Endothelial cell of umbilical vein (primary cell): ENCODE measurements at regions of chr4 and their contacts with region 1.

Region 1: GRCh38 chr4:90293320-90293719 is 166.1 kb downstream of the CCSER1 start:
- DNase-seq: peak; percentile 23
- H3K4me3 ChIP-seq: no peak overlapping the region
- H3K27ac ChIP-seq: no peak overlapping the region
- H3K4me1 ChIP-seq: no peaks in the 10 kb centered on the region
- H3K27me3 ChIP-seq: no peaks in the 10 kb centered on the region
- CTCF ChIP-seq: peak; percentile 11 to 13
- POLR2A ChIP-seq: no peak

Region 2: GRCh38 chr4:89226665-89227574 is 1066.4 kb before region 1 on chr4:
- CTCF ChIA-PET with region 1: interaction called, 9 read pairs
- POLR2A ChIA-PET with region 1: no interaction called
- dilution Hi-C with region 1: no loop called
- intact Hi-C with region 1: loop called (anchors 2 kb)
- DNase-seq: peak; percentile 79
- H3K4me3 ChIP-seq: no peak overlapping the region
- H3K27ac ChIP-seq: no peak overlapping the region
- H3K4me1 ChIP-seq: peaks cover 2% of the 10 kb centered on the region
- H3K27me3 ChIP-seq: no peaks in the 10 kb centered on the region
- CTCF ChIP-seq: peak; percentile 70 to 75
- POLR2A ChIP-seq: no peak

Region 3: DNA sequence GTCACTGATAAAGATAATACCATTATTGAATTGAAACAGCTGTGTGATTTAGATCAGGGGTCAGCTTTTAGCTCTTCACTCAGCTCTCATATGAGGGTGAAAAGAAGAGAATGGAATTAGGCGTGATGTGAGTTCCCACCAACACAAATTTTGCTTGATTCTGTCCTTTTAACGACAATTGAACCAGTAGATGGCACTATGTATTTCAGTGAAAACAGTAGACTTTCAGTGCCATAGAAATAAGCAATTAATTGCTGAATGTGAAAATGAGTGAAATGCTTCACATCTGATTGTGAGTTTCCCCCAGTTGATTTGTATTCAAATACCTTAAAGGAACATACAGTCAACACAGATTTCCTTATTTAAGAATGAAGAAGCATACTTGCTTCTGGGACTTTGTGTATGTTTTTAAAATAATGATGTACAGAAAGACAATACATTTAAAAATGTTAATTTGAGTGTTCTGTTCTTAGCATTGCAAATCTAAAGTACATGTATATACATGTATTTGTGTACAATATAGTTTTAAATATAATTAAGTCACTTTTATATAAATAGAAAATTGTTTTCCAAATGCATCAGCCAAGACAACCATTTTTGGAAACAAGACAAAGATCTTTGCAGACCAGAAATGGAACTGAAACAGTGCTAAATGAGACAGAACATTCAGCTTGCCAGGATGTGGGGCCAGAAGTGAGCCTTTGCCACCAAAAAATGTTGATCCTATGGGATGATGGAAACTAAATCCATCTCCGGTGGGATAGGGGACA is 635.2 kb before region 1 on chr4:
- CTCF ChIA-PET with region 1: no interaction called
- POLR2A ChIA-PET with region 1: no interaction called
- dilution Hi-C with region 1: no loop called
- intact Hi-C with region 1: loop called (anchors 5 kb)
- DNase-seq: peak; percentile 82
- H3K4me3 ChIP-seq: no peak overlapping the region
- H3K27ac ChIP-seq: no peak overlapping the region
- H3K4me1 ChIP-seq: peaks cover 9% of the 10 kb centered on the region
- H3K27me3 ChIP-seq: no peaks in the 10 kb centered on the region
- CTCF ChIP-seq: peak; percentile 29 to 34
- POLR2A ChIP-seq: no peak

Region 4: DNA sequence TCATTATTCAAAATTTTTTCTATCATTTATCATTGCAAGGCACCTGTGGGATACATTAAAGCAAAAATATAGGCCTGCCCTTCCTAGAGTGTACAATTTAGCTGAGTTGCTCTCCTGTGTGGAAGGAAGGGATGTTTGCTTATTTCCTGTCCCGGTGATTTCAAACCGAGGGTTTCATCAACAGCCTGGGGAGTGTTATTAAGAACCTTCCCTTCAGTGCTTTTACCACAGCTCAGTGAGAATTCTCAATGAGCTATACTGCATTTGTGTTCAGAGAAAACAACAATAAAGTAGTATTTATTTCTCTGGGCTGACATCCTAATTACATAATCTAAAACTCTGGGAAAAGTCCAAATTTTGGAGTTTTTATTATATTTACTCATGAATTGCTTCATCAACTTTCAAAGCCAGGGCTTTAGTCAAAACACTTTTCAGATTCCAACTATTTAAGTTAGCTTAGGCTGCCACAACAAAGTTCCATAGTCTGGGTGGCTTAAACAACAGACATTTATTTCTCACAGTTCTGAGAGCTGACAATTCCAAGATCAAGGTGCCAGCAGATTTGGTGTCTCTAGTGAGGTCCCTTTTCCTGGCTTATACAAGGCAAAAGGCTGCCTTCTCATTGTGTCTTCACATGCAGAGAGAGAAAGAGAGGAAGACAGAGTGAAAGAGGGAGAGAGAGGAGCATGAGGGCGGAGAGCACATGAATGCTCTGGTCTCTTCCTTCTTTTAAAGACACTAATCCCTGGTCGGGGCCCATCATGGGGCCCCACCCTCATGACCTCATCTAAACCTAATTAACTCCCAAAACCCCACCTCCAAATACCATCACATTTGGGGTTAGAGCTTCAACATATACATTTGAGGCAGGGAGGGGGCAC is 336.0 kb before region 1 on chr4:
- CTCF ChIA-PET with region 1: no interaction called
- POLR2A ChIA-PET with region 1: no interaction called
- dilution Hi-C with region 1: no loop called
- intact Hi-C with region 1: loop called (anchors 5 kb)
- DNase-seq: no peak
- H3K4me3 ChIP-seq: no peak overlapping the region
- H3K27ac ChIP-seq: no peak overlapping the region
- H3K4me1 ChIP-seq: no peaks in the 10 kb centered on the region
- H3K27me3 ChIP-seq: no peaks in the 10 kb centered on the region
- CTCF ChIP-seq: no peak
- POLR2A ChIP-seq: no peak

Region 5: DNA sequence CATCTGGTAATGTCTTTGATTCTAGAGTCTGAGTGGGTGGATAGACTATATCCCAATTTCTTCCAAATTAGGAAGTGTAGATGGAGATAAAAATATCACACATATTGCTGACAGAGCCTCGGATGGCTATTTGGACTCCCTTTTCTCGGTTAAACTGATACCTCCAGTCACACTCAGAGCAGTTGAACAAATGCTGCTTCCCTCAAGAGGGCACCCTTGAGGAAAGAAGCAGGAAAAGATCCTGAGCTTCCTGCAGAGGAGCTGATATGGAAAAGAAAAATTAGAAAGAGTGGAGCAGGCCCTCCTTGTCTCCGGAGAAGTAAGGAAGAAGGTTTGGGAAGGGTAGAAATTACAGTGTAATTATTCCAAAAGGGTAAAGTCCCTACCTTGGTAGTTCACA is 262.4 kb before region 1 on chr4:
- CTCF ChIA-PET with region 1: interaction called, 19 read pairs
- POLR2A ChIA-PET with region 1: no interaction called
- dilution Hi-C with region 1: no loop called
- intact Hi-C with region 1: no loop called
- DNase-seq: peak; percentile 10
- H3K4me3 ChIP-seq: no peak overlapping the region
- H3K27ac ChIP-seq: no peak overlapping the region
- H3K4me1 ChIP-seq: no peaks in the 10 kb centered on the region
- H3K27me3 ChIP-seq: peaks cover 0 to 3% of the 10 kb centered on the region in 2 experiments
- CTCF ChIP-seq: peak in 1 of 2 donors; percentile 20
- POLR2A ChIP-seq: no peak

Region 6: DNA sequence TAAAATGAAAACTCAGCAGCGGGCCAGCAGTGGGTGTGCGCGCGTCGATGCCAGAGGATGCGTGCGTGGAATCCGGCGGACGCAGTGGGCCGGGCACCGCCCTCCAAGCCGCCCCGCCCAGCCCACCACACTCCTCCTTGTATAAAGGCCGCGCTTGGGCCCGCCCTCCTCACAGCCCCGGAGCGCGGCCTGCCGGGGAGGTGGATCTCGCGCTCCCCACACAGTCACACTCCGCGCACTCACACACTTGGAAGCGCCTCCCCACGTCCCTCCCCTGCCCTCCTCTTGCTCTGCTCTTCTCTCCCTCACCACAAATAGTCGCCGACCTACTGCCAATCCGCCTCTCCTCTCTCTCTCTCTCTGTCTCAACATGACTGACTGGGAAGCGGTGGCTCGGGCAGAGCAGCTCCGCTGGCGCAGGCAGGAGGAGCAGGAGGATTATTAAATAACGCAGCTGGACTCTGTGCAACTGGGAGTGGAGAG is 166.1 kb before region 1 on chr4 and contains the start of gene CCSER1:
- CTCF ChIA-PET with region 1: interaction called, 3 read pairs
- POLR2A ChIA-PET with region 1: no interaction called
- dilution Hi-C with region 1: no loop called
- intact Hi-C with region 1: loop called (anchors 2 kb)
- DNase-seq: peak; percentile 66
- H3K4me3 ChIP-seq: peak within 1 kb of the TSS; percentile 51 to 76 (median 63)
- H3K27ac ChIP-seq: no peak within 1 kb of the TSS
- H3K4me1 ChIP-seq: peaks cover 13% of the 10 kb centered on the region
- H3K27me3 ChIP-seq: peaks cover 2 to 4% of the 10 kb centered on the region in 2 experiments
- CTCF ChIP-seq: no peak
- POLR2A ChIP-seq: peak; percentile 67
- total RNA-seq, gene CCSER1: 0.92 and 1.8 TPM in 2 replicates

Region 7: DNA sequence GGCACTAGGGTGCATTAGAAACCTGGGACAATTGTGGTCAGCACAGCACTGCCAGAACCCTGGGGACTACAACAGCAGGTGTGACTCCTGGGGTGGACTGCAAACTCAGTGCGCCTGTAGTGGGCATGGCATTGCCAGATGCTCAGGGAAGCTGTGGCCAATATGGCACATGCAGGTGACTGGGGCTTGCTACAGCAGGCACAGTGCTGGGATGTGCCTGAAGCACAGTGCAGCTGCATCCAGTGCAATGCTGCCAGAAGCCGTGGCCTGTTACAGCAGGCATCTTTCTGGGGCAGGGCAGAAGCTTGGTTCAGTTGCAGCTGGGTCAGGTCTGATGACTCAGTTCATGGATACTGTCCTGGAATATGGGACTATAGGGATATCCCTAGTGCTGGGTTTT is 279.7 kb after region 1 on chr4:
- CTCF ChIA-PET with region 1: no interaction called
- POLR2A ChIA-PET with region 1: no interaction called
- dilution Hi-C with region 1: no loop called
- intact Hi-C with region 1: no loop called
- DNase-seq: no peak
- H3K4me3 ChIP-seq: no peak overlapping the region
- H3K27ac ChIP-seq: no peak overlapping the region
- H3K4me1 ChIP-seq: no peaks in the 10 kb centered on the region
- H3K27me3 ChIP-seq: no peaks in the 10 kb centered on the region
- CTCF ChIP-seq: no peak
- POLR2A ChIP-seq: no peak